ENCODE measurements at regions of chr10 and their contacts with region 1.

Region 1: DNA sequence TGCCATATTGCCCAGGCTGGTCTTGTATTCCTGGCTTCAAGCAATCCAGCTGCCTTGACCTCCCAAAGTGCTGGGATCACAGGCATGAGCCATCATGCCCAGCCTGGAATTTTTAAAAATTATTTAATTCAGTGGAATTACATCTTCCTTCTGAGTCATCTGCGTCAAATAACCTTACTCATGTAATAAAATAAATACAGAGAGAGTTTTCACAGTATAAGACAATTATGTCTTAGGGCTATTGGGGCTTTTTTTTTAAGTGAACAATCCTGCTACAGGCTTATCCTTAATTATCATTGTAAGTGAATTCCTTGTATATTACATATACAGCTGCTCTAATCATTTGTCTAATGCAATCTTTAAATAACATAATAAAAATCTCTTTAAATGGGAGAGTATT is 108.3 kb downstream of the MAPK8 start:
- DNase-seq: no peak
- ATAC-seq: no peak
- H3K4me3 ChIP-seq: no peak overlapping the region
- H3K27ac ChIP-seq: no peak overlapping the region
- H3K4me1 ChIP-seq: no peaks in the 10 kb centered on the region
- H3K27me3 ChIP-seq: no peaks in the 10 kb centered on the region
- CTCF ChIP-seq: no peak

Region 2: GRCh38 chr10:48363617-48364355 is 51.0 kb before region 1 on chr10:
- intact Hi-C with region 1: loop called in 1 of 2 experiments (anchors 10 kb)
- DNase-seq: peak in 1 of 2 donors; percentile 12
- ATAC-seq: peak; percentile 61 to 89 (median 65)
- H3K4me3 ChIP-seq: no peak overlapping the region
- H3K27ac ChIP-seq: no peak overlapping the region
- H3K4me1 ChIP-seq: peaks cover 45% of the 10 kb centered on the region
- H3K27me3 ChIP-seq: no peaks in the 10 kb centered on the region
- CTCF ChIP-seq: peak; percentile 76

Region 3: DNA sequence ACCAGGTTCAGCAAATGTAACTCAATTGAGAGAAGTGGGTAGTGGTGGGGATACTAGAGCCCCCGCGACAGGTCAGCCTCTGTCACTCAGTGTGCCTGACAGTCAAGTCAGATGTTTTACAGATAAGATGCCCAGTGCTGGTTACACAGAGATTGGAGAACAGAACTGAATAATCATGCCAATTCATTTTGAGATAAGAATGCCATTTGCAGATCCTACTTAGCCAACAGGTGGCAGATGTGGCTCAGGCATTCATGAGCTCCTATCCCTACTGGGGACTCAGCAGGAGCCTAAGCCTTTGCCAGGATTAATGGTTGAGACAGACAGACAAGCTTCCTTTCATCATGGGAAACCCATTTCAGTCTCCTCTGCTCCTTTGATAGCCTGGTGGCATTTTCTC is 29.5 kb after region 1 on chr10:
- intact Hi-C with region 1: no loop called
- DNase-seq: no peak
- ATAC-seq: no peak
- H3K4me3 ChIP-seq: no peak overlapping the region
- H3K27ac ChIP-seq: no peak overlapping the region
- H3K4me1 ChIP-seq: peaks cover 5% of the 10 kb centered on the region
- H3K27me3 ChIP-seq: no peaks in the 10 kb centered on the region
- CTCF ChIP-seq: peak; percentile 21

Measured in psoas muscle (tissue), 8 donors.